PC-9 (cell line): ENCODE measurements at regions of chr13 and their contacts with region 1.

Region 1: DNA sequence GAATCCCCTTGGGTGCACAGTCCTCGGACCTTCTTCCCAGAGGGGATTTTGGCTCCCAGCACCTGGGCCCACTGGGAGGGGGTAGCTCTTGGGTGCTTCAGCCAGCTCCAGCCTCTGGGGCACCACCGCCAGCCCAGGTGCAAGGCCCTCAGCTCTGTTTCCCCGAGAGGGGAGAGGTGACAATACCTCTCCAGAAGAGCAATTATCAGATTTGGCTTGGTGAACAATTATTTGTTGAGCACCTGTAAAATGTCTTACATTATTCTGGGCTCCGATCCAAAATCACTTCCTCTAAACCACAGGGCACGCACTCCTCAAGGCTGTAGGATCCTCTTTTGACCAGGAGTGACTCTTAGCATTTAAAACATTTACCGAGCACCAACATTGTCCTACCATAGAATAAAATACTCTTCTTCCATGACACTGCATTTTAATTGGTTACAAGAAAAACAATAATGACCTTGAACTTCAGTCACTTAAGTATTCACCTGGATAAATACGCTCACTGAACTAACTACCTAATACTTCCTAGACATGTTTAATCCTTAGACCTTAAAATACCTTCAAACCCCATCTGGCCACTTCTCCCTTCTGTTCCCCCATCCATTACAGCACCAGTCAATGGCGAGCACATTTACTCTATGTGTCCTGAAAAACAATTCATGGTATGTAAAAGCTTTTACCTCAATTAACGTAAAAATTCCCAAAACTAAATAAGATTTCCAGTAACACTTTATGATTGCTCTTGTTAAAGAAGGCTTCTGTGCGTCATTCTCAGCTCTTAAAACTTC is 54.8 kb downstream of the ABCC4 start:
- DNase-seq: peak; percentile 47 to 95
- H3K4me3 ChIP-seq: no peak overlapping the region
- H3K27ac ChIP-seq: no peak overlapping the region
- H3K4me1 ChIP-seq: peaks cover 29% of the 10 kb centered on the region
- H3K27me3 ChIP-seq: no peaks in the 10 kb centered on the region
- CTCF ChIP-seq: no peak

Region 2: DNA sequence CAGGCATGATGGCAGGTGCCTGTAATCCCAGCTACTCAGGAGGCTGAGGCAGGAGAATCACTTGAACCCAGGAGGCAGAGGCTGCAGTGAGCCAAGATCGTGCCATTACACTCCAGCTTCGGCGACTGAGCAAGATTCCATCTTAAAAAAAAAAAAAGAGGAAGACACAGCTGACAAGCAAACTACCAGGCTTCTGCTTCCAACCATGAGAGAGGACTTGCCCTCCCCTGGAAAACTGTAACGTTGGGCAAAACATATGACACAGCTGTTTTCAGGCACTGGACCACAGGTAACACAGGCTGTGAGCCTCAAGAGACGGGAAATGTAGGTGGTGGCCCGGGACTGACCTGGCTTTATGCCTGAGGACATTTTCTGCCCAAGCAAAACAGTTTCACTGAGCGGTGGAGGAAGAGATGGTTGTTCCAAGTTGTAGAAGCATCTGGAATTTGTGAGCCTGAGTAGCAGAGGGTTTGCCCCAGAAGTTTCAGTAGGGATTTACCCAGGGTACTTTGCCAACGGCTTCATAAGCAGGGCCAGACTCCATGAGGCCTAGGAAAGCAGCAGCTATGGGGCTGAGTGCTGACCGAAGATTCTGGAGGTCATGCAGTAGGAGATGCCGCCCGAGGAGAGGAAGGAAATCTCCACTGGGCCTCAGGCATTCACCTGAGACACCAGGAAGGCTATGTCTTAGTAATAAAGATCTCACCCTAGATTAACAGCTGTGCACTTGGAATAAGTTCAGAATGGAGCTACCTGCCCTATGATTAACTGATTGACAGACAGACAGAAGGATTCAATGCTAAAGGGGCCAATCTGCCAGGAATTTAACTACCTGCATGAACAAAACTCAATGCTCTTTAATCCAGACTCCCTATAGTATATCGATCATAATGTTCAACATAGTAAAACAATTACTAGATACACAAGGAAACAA is 33.2 kb before region 1 on chr13:
- CTCF ChIA-PET with region 1: no interaction called
- POLR2A ChIA-PET with region 1: no interaction called
- intact Hi-C with region 1: loop called (anchors 2 kb)
- DNase-seq: peak; percentile 49 to 91
- H3K4me3 ChIP-seq: no peak overlapping the region
- H3K27ac ChIP-seq: peak overlapping the region; percentile 42
- H3K4me1 ChIP-seq: peaks cover 43% of the 10 kb centered on the region
- H3K27me3 ChIP-seq: no peaks in the 10 kb centered on the region
- CTCF ChIP-seq: no peak